GM12878 (cell line): ENCODE measurements at regions of chr7 and their contacts with region 1.

Region 1: GRCh38 chr7:113015032-113015645 is 71.5 kb downstream of the GPR85 start:
- DNase-seq: no peak
- ATAC-seq: no peak
- H3K4me3 ChIP-seq: no peak overlapping the region
- H3K27ac ChIP-seq: no peak overlapping the region
- H3K4me1 ChIP-seq: no peaks in the 10 kb centered on the region
- H3K27me3 ChIP-seq: no peaks in the 10 kb centered on the region
- CTCF ChIP-seq: peak in 1 of 3 experiments; percentile 12; a peak in 2 of 6 replicates
- EP300 ChIP-seq: no peak
- POLR2A ChIP-seq: no peak
- RAD21 ChIP-seq: 0 out of 2 replicates have a peak, but pooled peaks have one; percentile 18

Region 2: GRCh38 chr7:113289140-113289740 is 274.1 kb after region 1 on chr7:
- CTCF ChIA-PET with region 1: interaction called, 3 read pairs
- POLR2A ChIA-PET with region 1: no interaction called
- RAD21 ChIA-PET with region 1: interaction called, 6 read pairs
- SMC1A ChIA-PET with region 1: interaction called, 3 read pairs
- in situ Hi-C with region 1: no loop called
- intact Hi-C with region 1: loop called (anchors 10 kb)
- DNase-seq: no peak
- ATAC-seq: peak; percentile 87
- H3K4me3 ChIP-seq: no peak overlapping the region
- H3K27ac ChIP-seq: no peak overlapping the region
- H3K4me1 ChIP-seq: no peaks in the 10 kb centered on the region
- H3K27me3 ChIP-seq: no peaks in the 10 kb centered on the region
- CTCF ChIP-seq: peak; percentile 43 to 69 (median 59); a peak in 5 of 6 replicates
- EP300 ChIP-seq: no peak
- POLR2A ChIP-seq: no peak
- RAD21 ChIP-seq: peak; percentile 61